ENCODE measurements at regions of chr6 and their contacts with region 1.

Region 1: GRCh38 chr6:37169496-37170272 is at the start of gene PIM1:
- DNase-seq: peak; percentile 97
- H3K4me3 ChIP-seq: peak within 1 kb of the TSS; percentile 96
- H3K27ac ChIP-seq: peak within 1 kb of the TSS; percentile 71
- H3K4me1 ChIP-seq: peaks cover 19% of the 10 kb centered on the region
- CTCF ChIP-seq: no peak
- total RNA-seq, gene PIM1: 27.4 and 31.4 TPM in 2 replicates

Region 2: GRCh38 chr6:37029249-37029971 is 140.3 kb before region 1 on chr6:
- CTCF ChIA-PET with region 1: interaction called, 4 read pairs
- POLR2A ChIA-PET with region 1: interaction called, 3 read pairs
- intact Hi-C with region 1: loop called (anchors 1 kb)
- DNase-seq: peak; percentile 60
- H3K4me3 ChIP-seq: no peak overlapping the region
- H3K27ac ChIP-seq: no peak overlapping the region
- H3K4me1 ChIP-seq: no peaks in the 10 kb centered on the region
- CTCF ChIP-seq: peak; percentile 76

Region 3: GRCh38 chr6:37102279-37103168 is 67.2 kb before region 1 on chr6:
- CTCF ChIA-PET with region 1: interaction called, 3 read pairs
- POLR2A ChIA-PET with region 1: interaction called, 12 read pairs
- intact Hi-C with region 1: loop called (anchors 1 kb)
- DNase-seq: peak; percentile 86
- H3K4me3 ChIP-seq: peak overlapping the region; percentile 64
- H3K27ac ChIP-seq: peak overlapping the region; percentile 74
- H3K4me1 ChIP-seq: peaks cover 54% of the 10 kb centered on the region
- CTCF ChIP-seq: peak; percentile 38; the same call in 1 of the 2 replicates

Region 4: DNA sequence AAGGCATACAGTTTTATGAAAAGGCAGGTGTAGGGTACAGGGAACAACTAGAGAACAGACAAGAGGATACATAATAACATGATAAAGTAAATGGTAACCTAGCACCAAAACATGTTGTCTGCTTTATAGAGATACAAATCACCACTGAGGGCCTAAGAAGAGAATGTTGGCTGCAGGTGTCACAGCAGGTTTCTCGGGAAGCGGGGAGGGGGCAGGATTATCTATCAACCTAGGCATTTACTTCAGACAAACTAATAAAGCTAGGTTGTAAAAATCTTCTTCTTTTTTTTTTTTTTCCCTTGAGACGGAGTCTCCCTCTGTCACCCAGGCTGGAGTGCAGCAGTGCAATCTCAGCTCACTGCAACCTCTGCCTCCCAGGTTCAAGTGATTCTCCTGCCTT is 23.0 kb after region 1 on chr6:
- CTCF ChIA-PET with region 1: no interaction called
- POLR2A ChIA-PET with region 1: interaction called, 17 read pairs
- intact Hi-C with region 1: no loop called
- DNase-seq: no peak
- H3K4me3 ChIP-seq: no peak overlapping the region
- H3K27ac ChIP-seq: no peak overlapping the region
- H3K4me1 ChIP-seq: no peaks in the 10 kb centered on the region
- CTCF ChIP-seq: no peak

Region 5: DNA sequence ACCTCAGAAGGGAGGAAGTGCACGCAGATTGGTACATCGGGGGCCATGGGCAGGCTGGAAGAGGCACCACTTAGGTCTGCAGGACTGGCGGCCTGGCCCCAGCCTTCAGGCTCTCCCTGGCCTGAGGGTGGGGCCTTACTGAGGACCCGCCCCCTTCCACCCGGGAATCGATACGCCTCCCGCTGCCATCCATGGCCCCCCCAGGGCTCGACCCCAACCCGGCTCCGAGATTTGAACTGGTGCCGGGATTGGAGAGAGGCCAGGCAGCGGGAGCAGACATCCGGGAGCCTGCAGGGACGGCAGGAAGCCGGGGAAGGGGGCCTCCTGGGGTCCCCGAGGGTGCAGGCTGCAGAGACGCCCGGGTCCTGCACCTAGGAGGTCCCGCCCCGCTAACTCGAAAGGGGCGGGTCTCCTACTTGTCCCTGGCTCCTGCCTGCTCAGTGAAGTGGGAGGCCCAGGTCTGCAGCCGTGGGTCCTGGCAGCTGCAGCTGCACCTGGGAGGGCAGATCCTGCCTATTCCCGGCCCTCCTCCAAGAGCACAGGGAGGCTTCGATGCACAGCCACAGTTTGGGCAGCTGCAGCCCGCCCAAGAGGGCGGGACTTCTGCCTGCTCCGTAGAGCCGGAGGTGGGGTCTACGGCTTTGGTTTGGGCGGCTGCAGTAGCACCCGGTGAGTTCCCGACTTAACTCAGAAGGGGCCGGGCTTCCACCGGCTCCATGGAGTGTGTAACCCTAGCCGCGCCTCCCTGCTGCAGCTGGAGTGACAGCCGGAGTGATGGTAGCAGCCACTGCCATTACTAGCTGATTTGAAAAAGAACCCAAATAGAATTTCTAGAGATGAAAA is 52.7 kb after region 1 on chr6:
- CTCF ChIA-PET with region 1: no interaction called
- POLR2A ChIA-PET with region 1: no interaction called
- intact Hi-C with region 1: no loop called
- DNase-seq: peak; percentile 79
- H3K4me3 ChIP-seq: peak overlapping the region; percentile 68
- H3K27ac ChIP-seq: no peak overlapping the region
- H3K4me1 ChIP-seq: peaks cover 8% of the 10 kb centered on the region
- CTCF ChIP-seq: no peak